ENCODE measurements at regions of chr5 and their contacts with region 1.

Region 1: DNA sequence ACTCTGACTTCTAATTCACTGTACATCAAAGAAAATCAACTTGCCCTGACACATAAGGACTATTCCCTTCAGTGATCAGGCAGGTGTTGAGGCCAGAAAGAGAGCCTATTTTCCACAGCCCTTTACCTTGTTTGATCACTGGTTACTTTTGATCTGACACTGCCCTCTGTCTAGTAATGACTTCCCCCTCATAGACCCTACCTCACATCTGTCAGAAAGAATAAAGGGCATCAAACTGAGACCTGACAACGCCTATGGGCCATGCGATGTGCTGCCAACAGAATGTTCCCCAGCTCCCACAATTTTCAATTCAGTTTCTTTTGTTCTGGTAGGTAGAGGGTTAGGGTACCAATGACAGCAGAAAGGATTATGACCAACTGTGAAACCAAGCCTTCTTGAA is 47.7 kb downstream of the FBXL17 start:
- DNase-seq: no peak
- ATAC-seq: no peak
- H3K4me3 ChIP-seq: no peak overlapping the region
- H3K27ac ChIP-seq: no peak overlapping the region
- H3K4me1 ChIP-seq: no peaks in the 10 kb centered on the region
- H3K27me3 ChIP-seq: no peaks in the 10 kb centered on the region
- CTCF ChIP-seq: no peak

Region 2: DNA sequence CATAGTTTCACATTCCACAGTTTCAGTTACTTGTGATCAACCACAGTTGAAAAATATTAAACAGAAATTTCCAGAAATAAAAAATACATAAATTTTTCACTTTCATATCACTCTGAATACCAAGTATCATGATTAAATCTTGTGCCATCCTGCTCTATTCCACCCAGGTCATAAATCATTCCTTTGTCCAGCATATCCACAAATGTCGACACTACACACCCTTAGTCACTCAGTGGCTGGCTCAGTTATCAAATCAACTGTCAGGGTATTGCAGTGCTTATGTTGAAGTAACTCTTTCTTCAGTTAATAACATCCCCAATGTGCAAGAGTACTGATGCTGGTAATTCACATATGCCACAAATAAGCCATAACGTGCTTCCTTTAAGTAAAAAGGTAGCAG is 68.0 kb before region 1 on chr5:
- CTCF ChIA-PET with region 1: no interaction called
- POLR2A ChIA-PET with region 1: no interaction called
- in situ Hi-C with region 1: no loop called
- intact Hi-C with region 1: loop called (anchors 5 kb)
- DNase-seq: no peak
- ATAC-seq: no peak
- H3K4me3 ChIP-seq: no peak overlapping the region
- H3K27ac ChIP-seq: no peak overlapping the region
- H3K4me1 ChIP-seq: no peaks in the 10 kb centered on the region
- H3K27me3 ChIP-seq: no peaks in the 10 kb centered on the region
- CTCF ChIP-seq: no peak

Measured in Panc1 (cell line).